SK-N-SH (cell line): ENCODE measurements at regions of chr4 and their contacts with region 1.

Region 1: GRCh38 chr4:118968005-118968404 is 79.4 kb downstream of the SYNPO2 start:
- DNase-seq: no peak
- H3K4me3 ChIP-seq: peak overlapping the region in 1 of 2 experiments; percentile 2; a peak in 1 of 4 replicates
- H3K27ac ChIP-seq: peak overlapping the region; percentile 70 to 91
- H3K4me1 ChIP-seq: peaks cover 13 to 34% of the 10 kb centered on the region in 2 experiments
- H3K27me3 ChIP-seq: no peaks in the 10 kb centered on the region
- CTCF ChIP-seq: no peak
- EP300 ChIP-seq: no peak
- RAD21 ChIP-seq: no peak

Region 2: GRCh38 chr4:118740869-118741268 is 227.1 kb before region 1 on chr4:
- CTCF ChIA-PET with region 1: interaction called, 19 read pairs
- POLR2A ChIA-PET with region 1: no interaction called
- DNase-seq: peak; percentile 10
- H3K4me3 ChIP-seq: no peak overlapping the region
- H3K27ac ChIP-seq: peak overlapping the region; percentile 45 to 86; a peak in 3 of 4 replicates
- H3K4me1 ChIP-seq: peaks cover 0 to 14% of the 10 kb centered on the region in 2 experiments; a peak in 2 of 4 replicates
- H3K27me3 ChIP-seq: no peaks in the 10 kb centered on the region
- CTCF ChIP-seq: peak; percentile 61
- EP300 ChIP-seq: no peak
- RAD21 ChIP-seq: peak; percentile 63

Region 3: DNA sequence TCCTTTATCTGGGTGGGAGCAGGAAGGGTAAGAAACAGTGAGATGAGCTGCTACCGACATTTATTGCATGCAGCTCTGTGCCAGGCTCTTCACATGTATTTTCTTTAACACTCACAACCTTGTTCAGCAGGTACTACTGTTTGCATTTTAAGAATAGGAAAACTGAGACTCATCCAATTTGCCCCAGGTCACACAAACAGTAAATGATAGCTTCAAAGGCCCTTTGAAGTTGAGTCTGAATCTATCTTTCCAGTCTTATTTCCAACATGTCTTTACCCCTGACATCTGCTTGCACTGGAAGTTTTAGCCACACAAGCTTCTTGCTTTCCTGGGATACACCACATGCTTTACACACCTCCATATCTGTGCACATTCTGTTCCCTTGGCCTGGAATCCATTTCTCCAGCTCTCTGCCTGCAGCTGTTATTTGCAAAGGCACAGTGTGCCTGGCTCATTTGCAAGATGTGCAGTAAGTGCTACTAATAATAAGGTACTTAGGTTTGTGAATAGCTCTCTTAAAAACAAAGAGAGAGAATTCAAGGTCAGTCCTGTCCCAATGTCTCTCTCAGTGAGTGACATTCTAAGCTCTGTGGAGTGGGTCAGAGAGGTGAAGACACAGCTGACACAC is 221.6 kb before region 1 on chr4:
- CTCF ChIA-PET with region 1: interaction called, 19 read pairs
- POLR2A ChIA-PET with region 1: no interaction called
- DNase-seq: no peak
- H3K4me3 ChIP-seq: no peak overlapping the region
- H3K27ac ChIP-seq: peak overlapping the region in 1 of 2 experiments; percentile 70; a peak in 2 of 4 replicates
- H3K4me1 ChIP-seq: peaks cover 3 to 22% of the 10 kb centered on the region in 2 experiments; a peak in 2 of 4 replicates
- H3K27me3 ChIP-seq: no peaks in the 10 kb centered on the region
- CTCF ChIP-seq: no peak
- EP300 ChIP-seq: no peak
- RAD21 ChIP-seq: no peak

Region 4: GRCh38 chr4:118752551-118752950 is 215.5 kb before region 1 on chr4:
- CTCF ChIA-PET with region 1: interaction called, 19 read pairs
- POLR2A ChIA-PET with region 1: no interaction called
- DNase-seq: no peak
- H3K4me3 ChIP-seq: no peak overlapping the region
- H3K27ac ChIP-seq: peak overlapping the region; percentile 69 to 99
- H3K4me1 ChIP-seq: peaks cover 32 to 35% of the 10 kb centered on the region in 2 experiments; a peak in 3 of 4 replicates
- H3K27me3 ChIP-seq: no peaks in the 10 kb centered on the region
- CTCF ChIP-seq: no peak
- EP300 ChIP-seq: no peak
- RAD21 ChIP-seq: no peak

Region 5: DNA sequence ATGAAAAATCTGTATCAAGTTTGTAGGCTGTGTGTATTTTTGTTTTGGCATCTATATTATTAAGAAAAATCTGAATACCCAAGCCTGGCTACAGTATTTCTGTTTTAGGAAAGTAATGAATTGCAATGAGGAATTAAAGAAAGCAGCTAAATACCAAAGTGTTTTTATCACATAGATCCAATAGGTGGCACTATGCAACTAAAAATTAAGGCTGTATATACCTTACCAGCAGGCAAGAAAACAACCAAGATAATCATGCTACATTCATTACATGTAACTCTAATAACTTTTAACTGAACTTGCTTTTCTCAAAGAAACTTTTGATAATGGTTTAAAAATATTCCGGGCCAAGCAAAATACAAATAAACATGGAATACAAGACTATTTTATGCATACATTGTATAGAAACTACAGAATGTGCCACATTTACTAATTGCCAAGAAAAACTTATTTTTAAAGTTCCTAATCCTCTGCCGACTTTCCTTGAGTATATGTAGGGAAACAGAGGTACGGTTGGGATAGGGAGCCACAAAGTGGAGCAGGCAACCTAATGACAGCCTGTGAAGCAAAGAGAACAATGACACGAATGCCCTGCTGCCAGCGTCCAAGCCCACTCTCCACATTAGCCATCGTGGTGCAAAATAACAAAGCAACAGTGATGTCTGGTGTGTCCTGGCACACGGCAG is 195.8 kb before region 1 on chr4:
- CTCF ChIA-PET with region 1: interaction called, 62 read pairs
- POLR2A ChIA-PET with region 1: no interaction called
- DNase-seq: no peak
- H3K4me3 ChIP-seq: no peak overlapping the region; a peak in 1 of 4 replicates
- H3K27ac ChIP-seq: peak overlapping the region; percentile 69 to 99
- H3K4me1 ChIP-seq: peaks cover 54 to 63% of the 10 kb centered on the region in 2 experiments
- H3K27me3 ChIP-seq: no peaks in the 10 kb centered on the region
- CTCF ChIP-seq: peak; percentile 77
- EP300 ChIP-seq: no peak
- RAD21 ChIP-seq: peak; percentile 88

Region 6: GRCh38 chr4:118941149-118941548 is 26.9 kb before region 1 on chr4:
- CTCF ChIA-PET with region 1: interaction called, 10 read pairs
- POLR2A ChIA-PET with region 1: no interaction called
- DNase-seq: no peak
- H3K4me3 ChIP-seq: no peak overlapping the region
- H3K27ac ChIP-seq: peak overlapping the region in 1 of 2 experiments; percentile 41; a peak in 2 of 4 replicates
- H3K4me1 ChIP-seq: peaks cover 7 to 26% of the 10 kb centered on the region in 2 experiments; a peak in 3 of 4 replicates
- H3K27me3 ChIP-seq: no peaks in the 10 kb centered on the region
- CTCF ChIP-seq: no peak
- EP300 ChIP-seq: no peak
- RAD21 ChIP-seq: no peak

Region 7: GRCh38 chr4:118981839-118982381 is 13.9 kb after region 1 on chr4:
- CTCF ChIA-PET with region 1: interaction called, 20 read pairs
- POLR2A ChIA-PET with region 1: no interaction called
- DNase-seq: peak; percentile 73
- H3K4me3 ChIP-seq: no peak overlapping the region
- H3K27ac ChIP-seq: peak overlapping the region in 1 of 2 experiments; percentile 28; a peak in 1 of 4 replicates
- H3K4me1 ChIP-seq: peaks cover 5 to 9% of the 10 kb centered on the region in 2 experiments
- H3K27me3 ChIP-seq: no peaks in the 10 kb centered on the region
- CTCF ChIP-seq: peak; percentile 87
- EP300 ChIP-seq: no peak
- RAD21 ChIP-seq: peak; percentile 97

Region 8: GRCh38 chr4:119138046-119138445 is 170.0 kb after region 1 on chr4:
- CTCF ChIA-PET with region 1: no interaction called
- POLR2A ChIA-PET with region 1: no interaction called
- DNase-seq: no peak
- H3K4me3 ChIP-seq: no peak overlapping the region
- H3K27ac ChIP-seq: no peak overlapping the region; a peak in 1 of 4 replicates
- H3K4me1 ChIP-seq: peaks cover 0 to 19% of the 10 kb centered on the region in 2 experiments; a peak in 3 of 4 replicates
- H3K27me3 ChIP-seq: no peaks in the 10 kb centered on the region
- CTCF ChIP-seq: no peak
- EP300 ChIP-seq: 0 out of 4 replicates have a peak, but pooled peaks of 1 of the 2 experiments have one; percentile 8
- RAD21 ChIP-seq: no peak